ENCODE measurements at regions of chr11 and their contacts with region 1.

Region 1: DNA sequence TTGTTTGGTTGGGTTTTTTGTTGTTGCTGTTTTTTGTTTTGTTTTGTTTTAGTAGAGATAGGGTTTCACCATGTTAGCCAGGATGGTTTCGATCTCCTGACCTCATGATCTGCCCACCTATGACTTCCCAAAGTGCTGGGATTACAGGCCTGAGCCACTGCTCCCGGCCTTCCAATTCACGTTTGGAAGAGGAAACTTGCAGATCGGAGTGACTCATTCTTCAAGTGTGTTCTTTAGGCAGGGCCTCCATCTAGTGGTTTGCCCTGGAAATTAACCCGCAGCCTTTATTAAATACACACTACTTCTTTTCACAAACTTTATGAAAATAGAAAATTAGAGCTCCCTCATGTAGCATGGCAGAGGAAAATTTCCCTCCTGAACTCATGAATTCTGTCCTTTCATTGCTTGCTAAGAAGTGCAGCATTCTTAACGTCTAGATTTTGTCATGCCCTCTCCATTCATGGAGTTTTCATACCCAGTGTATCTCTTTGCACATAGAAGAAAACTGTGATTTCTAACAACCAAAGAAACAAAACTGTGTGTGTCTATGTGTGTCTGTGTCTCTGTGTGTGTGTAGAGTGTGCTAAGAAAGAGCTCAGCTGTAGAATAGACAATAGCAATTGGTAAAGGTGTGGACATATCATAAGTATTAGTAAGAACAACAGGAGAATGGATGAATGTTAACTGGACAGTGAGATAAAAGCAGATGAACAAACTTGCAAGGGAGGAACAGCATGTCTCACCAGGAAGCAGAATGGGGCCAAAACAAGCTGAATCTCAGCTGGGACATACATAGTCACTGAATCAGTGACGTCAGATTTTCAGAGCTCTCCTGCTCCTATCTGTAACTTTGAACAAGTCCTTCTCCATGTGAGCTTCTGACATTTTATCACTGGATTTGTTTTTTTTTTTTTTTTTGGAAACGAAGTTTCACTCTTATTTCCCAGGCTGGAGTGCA is 118.4 kb downstream of the BBOX1 start:
- DNase-seq: peak; percentile 46
- H3K4me3 ChIP-seq: no peak overlapping the region
- CTCF ChIP-seq: peak; percentile 64

Region 2: DNA sequence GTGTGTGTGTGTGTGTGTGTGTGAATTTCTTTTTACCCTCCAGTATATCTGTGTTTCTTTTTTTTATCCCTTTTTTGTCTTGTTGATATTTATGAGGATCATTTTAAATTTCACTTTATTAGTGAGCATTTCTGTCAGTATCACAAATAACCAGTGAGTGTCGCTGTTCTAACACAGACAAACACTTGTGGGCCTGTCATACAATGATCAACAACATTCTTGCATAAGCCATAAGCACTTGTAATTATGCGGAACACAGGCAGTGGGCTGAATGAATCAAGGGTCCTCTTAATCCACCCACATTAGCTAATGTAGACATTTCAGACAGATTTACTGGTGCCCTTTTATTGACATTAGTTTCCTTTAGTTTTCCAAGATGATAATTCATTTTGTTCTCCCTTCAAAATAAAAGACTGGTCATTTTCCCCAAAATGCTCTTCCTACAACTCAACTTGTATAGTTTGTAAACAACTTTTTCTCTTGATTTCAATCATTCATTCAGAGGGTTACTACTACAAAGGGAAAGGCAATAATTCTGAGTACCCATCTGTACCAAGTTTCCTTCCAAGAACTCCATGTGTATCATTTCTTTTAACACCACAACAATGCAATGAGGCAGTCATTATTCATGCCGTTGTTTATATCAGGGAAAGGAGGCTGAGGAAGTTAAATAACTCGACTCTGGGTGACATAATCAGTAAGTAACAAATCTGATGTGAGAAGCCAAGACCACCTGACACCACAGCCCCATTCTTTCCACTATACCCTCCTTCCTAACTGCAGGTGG is 861.6 kb before region 1 on chr11:
- CTCF ChIA-PET with region 1: interaction called, 44 read pairs
- POLR2A ChIA-PET with region 1: no interaction called
- DNase-seq: peak; percentile 41
- H3K4me3 ChIP-seq: no peak overlapping the region
- CTCF ChIP-seq: peak; percentile 60

Region 3: DNA sequence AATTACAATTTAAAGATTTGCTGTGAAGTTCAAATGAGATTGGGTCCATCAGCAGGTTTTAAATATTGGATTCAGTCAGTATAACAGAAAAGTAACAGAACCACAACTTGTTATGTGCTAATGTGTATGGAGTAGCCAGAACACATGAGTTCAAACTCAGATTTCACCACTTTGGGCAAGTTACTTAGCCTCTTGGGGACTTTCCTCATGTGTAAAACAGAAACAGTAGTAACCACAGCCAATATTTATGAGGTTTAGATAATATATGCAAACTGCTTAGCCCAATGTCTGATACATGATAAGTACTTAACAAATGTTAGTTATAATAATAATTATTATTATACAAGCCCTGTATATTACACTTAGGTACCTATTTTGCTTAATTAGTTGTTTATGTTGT is 415.4 kb before region 1 on chr11:
- CTCF ChIA-PET with region 1: interaction called, 18 read pairs
- POLR2A ChIA-PET with region 1: no interaction called
- DNase-seq: no peak
- H3K4me3 ChIP-seq: no peak overlapping the region
- CTCF ChIP-seq: no peak

Region 4: DNA sequence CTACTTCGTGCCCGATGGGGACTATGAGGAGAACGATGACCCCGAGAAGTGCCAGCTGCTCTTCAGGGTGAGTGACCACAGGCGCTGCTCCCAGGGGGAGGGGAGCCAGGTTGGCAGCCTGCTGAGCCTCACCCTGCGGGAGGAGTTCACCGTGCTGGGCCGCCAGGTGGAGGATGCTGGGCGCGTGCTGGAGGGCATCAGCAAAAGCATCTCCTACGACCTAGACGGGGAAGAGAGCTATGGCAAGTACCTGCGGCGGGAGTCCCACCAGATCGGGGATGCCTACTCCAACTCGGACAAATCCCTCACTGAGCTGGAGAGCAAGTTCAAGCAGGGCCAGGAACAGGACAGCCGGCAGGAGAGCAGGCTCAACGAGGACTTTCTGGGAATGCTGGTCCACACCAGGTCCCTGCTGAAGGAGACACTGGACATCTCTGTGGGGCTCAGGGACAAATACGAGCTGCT is 164.3 kb before region 1 on chr11:
- CTCF ChIA-PET with region 1: interaction called, 12 read pairs
- POLR2A ChIA-PET with region 1: interaction called, 3 read pairs
- DNase-seq: no peak
- H3K4me3 ChIP-seq: peak overlapping the region; percentile 77
- CTCF ChIP-seq: no peak

Region 5: GRCh38 chr11:27141576-27141975 is 17.4 kb before region 1 on chr11:
- CTCF ChIA-PET with region 1: interaction called, 52 read pairs
- POLR2A ChIA-PET with region 1: no interaction called
- DNase-seq: no peak
- H3K4me3 ChIP-seq: no peak overlapping the region
- CTCF ChIP-seq: no peak